Activated naive CD4-positive, alpha-beta T cell treated with anti-CD3 and anti-CD28 coated beads for 36 hours (primary cell): ENCODE measurements at regions of chr11 and their contacts with region 1.

Region 1: GRCh38 chr11:96342961-96343711 is at the start of gene MAML2:
- DNase-seq: peak; percentile 97
- H3K4me3 Mint-ChIP-seq: peak within 1 kb of the TSS; percentile 98
- H3K27ac Mint-ChIP-seq: peak within 1 kb of the TSS; percentile 94
- H3K4me1 Mint-ChIP-seq: peaks cover 22% of the 10 kb centered on the region
- H3K27me3 Mint-ChIP-seq: no peaks in the 10 kb centered on the region
- total RNA-seq, gene MAML2: 26.6 to 28.1 TPM

Region 2: GRCh38 chr11:95835768-95836488 is 507.2 kb before region 1 on chr11:
- CTCF ChIA-PET with region 1: interaction called, 7 read pairs
- intact Hi-C with region 1: loop called (anchors 1 kb)
- DNase-seq: peak; percentile 77
- H3K4me3 Mint-ChIP-seq: no peak overlapping the region
- H3K27ac Mint-ChIP-seq: no peak overlapping the region
- H3K4me1 Mint-ChIP-seq: peaks cover 4% of the 10 kb centered on the region
- H3K27me3 Mint-ChIP-seq: no peaks in the 10 kb centered on the region

Region 3: GRCh38 chr11:96054870-96055705 is 288.0 kb before region 1 on chr11:
- CTCF ChIA-PET with region 1: interaction called, 30 read pairs
- intact Hi-C with region 1: loop called (anchors 1 kb)
- DNase-seq: no peak
- H3K4me3 Mint-ChIP-seq: no peak overlapping the region
- H3K27ac Mint-ChIP-seq: peak overlapping the region; percentile 87
- H3K4me1 Mint-ChIP-seq: peaks cover 81% of the 10 kb centered on the region
- H3K27me3 Mint-ChIP-seq: no peaks in the 10 kb centered on the region

Region 4: GRCh38 chr11:96188243-96189006 is 154.7 kb before region 1 on chr11:
- CTCF ChIA-PET with region 1: interaction called, 8 read pairs
- intact Hi-C with region 1: loop called (anchors 1 kb)
- DNase-seq: peak; percentile 49
- H3K4me3 Mint-ChIP-seq: peak overlapping the region; percentile 38
- H3K27ac Mint-ChIP-seq: peak overlapping the region; percentile 92
- H3K4me1 Mint-ChIP-seq: peaks cover 90% of the 10 kb centered on the region
- H3K27me3 Mint-ChIP-seq: no peaks in the 10 kb centered on the region

Region 5: DNA sequence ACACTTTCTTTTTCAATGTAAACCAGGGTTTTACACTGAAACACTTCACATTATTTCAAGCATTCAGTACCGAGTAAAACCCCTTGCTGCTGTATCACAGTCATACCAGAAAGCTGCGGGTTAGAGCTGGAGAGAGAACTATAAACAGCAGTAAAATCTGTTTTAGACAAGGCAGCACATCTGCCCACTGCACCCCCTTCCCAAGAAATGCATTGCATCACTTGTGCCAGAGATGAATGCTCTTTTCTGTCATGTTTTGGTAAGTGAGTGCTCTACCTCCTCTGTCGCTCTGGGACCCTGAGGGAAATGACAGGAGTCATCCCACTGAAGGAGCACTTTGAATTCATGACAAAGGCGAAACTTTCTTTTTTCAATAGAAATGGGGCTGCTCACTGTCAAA is 107.4 kb before region 1 on chr11:
- CTCF ChIA-PET with region 1: interaction called, 11 read pairs
- intact Hi-C with region 1: loop called (anchors 1 kb)
- DNase-seq: peak; percentile 89
- H3K4me3 Mint-ChIP-seq: peak overlapping the region; percentile 38
- H3K27ac Mint-ChIP-seq: peak overlapping the region; percentile 90
- H3K4me1 Mint-ChIP-seq: peaks cover 24% of the 10 kb centered on the region
- H3K27me3 Mint-ChIP-seq: no peaks in the 10 kb centered on the region

Region 6: GRCh38 chr11:96287822-96288439 is 55.2 kb before region 1 on chr11:
- CTCF ChIA-PET with region 1: interaction called, 14 read pairs
- intact Hi-C with region 1: loop called (anchors 1 kb)
- DNase-seq: no peak
- H3K4me3 Mint-ChIP-seq: peak overlapping the region; percentile 4
- H3K27ac Mint-ChIP-seq: peak overlapping the region; percentile 9
- H3K4me1 Mint-ChIP-seq: peaks cover 88% of the 10 kb centered on the region
- H3K27me3 Mint-ChIP-seq: no peaks in the 10 kb centered on the region

Region 7: DNA sequence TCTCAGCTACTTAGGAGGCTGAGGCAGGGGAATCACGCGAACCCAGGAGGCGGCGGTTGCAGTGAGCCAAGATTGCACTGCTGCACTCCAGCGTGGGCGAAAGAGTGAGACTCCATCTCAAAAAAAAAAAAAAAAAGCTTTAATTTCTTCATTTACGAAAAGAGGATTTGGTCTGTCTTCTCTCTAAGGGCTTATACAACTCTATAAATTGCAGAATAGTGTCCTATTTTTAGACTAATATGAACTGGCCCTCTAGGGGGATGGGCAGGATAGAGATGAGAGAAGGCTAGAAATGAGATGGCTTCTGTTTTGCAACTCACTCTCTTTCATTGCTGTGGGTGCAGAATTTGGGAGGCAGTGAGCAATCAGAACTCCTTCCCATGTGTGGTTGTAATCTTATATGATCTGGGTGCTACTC is 11.4 kb before region 1 on chr11:
- CTCF ChIA-PET with region 1: interaction called, 20 read pairs
- intact Hi-C with region 1: no loop called
- DNase-seq: no peak
- H3K4me3 Mint-ChIP-seq: no peak overlapping the region
- H3K27ac Mint-ChIP-seq: peak overlapping the region; percentile 47
- H3K4me1 Mint-ChIP-seq: peaks cover 82% of the 10 kb centered on the region
- H3K27me3 Mint-ChIP-seq: no peaks in the 10 kb centered on the region

Region 8: GRCh38 chr11:96376796-96377195 is 33.7 kb after region 1 on chr11:
- CTCF ChIA-PET with region 1: no interaction called
- intact Hi-C with region 1: no loop called
- DNase-seq: no peak
- H3K4me3 Mint-ChIP-seq: no peak overlapping the region
- H3K27ac Mint-ChIP-seq: no peak overlapping the region
- H3K4me1 Mint-ChIP-seq: no peaks in the 10 kb centered on the region
- H3K27me3 Mint-ChIP-seq: no peaks in the 10 kb centered on the region

Region 9: DNA sequence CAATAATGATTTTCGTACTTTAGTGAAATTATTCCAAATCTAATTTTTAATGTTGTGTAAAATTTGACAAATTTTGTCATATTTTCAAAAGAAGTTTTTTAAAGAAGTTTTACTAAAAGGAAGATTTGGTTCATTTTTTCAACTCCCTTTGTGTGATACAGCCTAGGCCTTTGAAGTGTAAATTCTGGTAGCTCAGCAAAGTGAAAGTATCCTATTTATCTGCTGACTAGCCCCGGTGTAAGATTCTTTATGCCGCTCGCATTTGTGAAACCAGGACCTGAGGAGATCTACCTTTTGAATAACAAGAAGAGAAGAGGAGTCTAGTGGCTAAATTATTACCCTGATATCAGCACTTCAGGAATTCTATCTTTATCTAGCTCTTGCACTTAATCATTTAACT is 224.0 kb after region 1 on chr11:
- CTCF ChIA-PET with region 1: no interaction called
- intact Hi-C with region 1: no loop called
- DNase-seq: no peak
- H3K4me3 Mint-ChIP-seq: no peak overlapping the region
- H3K27ac Mint-ChIP-seq: no peak overlapping the region
- H3K4me1 Mint-ChIP-seq: no peaks in the 10 kb centered on the region
- H3K27me3 Mint-ChIP-seq: no peaks in the 10 kb centered on the region

Region 10: GRCh38 chr11:96635655-96636054 is 292.5 kb after region 1 on chr11:
- CTCF ChIA-PET with region 1: no interaction called
- intact Hi-C with region 1: no loop called
- DNase-seq: no peak
- H3K4me3 Mint-ChIP-seq: no peak overlapping the region
- H3K27ac Mint-ChIP-seq: no peak overlapping the region
- H3K4me1 Mint-ChIP-seq: no peaks in the 10 kb centered on the region
- H3K27me3 Mint-ChIP-seq: no peaks in the 10 kb centered on the region